ENCODE measurements at regions of chr11 and their contacts with region 1.

Region 1: DNA sequence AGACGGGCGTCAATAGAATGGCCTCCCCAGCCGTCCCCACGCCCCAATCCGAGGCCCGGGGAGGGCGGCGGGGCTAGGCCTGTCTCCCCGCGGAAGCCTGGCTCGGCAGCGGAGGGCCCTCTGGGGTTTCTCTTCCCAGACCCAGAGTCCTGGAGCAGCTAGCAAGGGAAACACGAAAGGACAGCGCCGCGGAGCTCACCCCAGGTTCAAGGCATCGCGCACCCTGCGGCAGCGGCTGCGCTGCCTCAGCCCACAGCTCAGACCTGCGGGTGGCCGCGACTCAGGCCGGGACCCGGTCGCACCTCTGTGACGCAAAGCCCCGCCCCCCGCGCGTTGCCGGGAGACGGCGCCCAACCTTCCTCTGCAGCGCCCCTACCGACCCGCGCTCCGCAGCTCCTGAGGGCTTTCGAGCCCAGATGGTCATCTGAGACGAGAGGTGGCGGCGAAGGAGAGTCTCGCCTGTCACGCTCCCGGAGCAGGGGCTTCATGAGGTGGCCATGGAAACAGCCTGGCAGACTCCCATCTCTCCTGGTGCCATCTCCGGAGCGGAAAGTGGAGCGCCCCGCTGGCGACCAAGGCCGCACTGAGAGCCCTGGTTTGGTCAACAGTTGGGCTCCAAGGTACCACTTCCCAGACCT is at the start of gene RNF141:
- DNase-seq: peak; percentile 97
- ATAC-seq: peak; percentile 98
- H3K4me3 Mint-ChIP-seq: peak within 1 kb of the TSS; percentile 93
- H3K27ac Mint-ChIP-seq: peak within 1 kb of the TSS; percentile 86
- H3K4me1 Mint-ChIP-seq: peaks cover 24% of the 10 kb centered on the region
- H3K27me3 Mint-ChIP-seq: no peaks in the 10 kb centered on the region
- CTCF ChIP-seq: peak; percentile 87
- total RNA-seq, gene RNF141: 19.4 to 20.8 TPM

Region 2: GRCh38 chr11:10155793-10156490 is 385.1 kb before region 1 on chr11:
- CTCF ChIA-PET with region 1: no interaction called
- POLR2A ChIA-PET with region 1: no interaction called
- intact Hi-C with region 1: no loop called
- DNase-seq: no peak
- ATAC-seq: no peak
- H3K4me3 Mint-ChIP-seq: no peak overlapping the region
- H3K27ac Mint-ChIP-seq: no peak overlapping the region
- H3K4me1 Mint-ChIP-seq: peaks cover 3% of the 10 kb centered on the region
- H3K27me3 Mint-ChIP-seq: no peaks in the 10 kb centered on the region
- CTCF ChIP-seq: no peak

Region 3: DNA sequence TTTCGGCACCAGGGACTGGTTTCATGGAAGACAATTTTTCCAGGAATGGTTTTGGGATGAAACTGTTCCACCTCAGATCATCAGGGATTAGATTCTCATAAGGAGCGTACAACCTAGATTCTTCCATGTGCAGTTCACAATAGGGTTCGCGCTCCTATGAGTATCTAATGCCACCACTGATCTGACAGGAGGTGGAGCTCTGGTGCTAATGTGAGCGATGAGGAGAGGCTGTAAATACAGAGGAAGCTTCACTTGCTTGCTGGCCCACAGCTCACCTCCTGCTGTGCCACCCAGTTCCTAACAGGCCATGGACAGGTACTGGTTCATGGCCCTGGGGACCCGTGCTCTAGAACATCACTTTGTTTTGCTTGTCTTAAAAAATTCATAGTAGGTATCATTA is 127.8 kb before region 1 on chr11:
- CTCF ChIA-PET with region 1: interaction called, 40 read pairs
- POLR2A ChIA-PET with region 1: no interaction called
- intact Hi-C with region 1: no loop called
- DNase-seq: peak; percentile 72
- ATAC-seq: peak; percentile 93
- H3K4me3 Mint-ChIP-seq: no peak overlapping the region
- H3K27ac Mint-ChIP-seq: no peak overlapping the region
- H3K4me1 Mint-ChIP-seq: peaks cover 28% of the 10 kb centered on the region
- H3K27me3 Mint-ChIP-seq: no peaks in the 10 kb centered on the region
- CTCF ChIP-seq: peak; percentile 58

Region 4: DNA sequence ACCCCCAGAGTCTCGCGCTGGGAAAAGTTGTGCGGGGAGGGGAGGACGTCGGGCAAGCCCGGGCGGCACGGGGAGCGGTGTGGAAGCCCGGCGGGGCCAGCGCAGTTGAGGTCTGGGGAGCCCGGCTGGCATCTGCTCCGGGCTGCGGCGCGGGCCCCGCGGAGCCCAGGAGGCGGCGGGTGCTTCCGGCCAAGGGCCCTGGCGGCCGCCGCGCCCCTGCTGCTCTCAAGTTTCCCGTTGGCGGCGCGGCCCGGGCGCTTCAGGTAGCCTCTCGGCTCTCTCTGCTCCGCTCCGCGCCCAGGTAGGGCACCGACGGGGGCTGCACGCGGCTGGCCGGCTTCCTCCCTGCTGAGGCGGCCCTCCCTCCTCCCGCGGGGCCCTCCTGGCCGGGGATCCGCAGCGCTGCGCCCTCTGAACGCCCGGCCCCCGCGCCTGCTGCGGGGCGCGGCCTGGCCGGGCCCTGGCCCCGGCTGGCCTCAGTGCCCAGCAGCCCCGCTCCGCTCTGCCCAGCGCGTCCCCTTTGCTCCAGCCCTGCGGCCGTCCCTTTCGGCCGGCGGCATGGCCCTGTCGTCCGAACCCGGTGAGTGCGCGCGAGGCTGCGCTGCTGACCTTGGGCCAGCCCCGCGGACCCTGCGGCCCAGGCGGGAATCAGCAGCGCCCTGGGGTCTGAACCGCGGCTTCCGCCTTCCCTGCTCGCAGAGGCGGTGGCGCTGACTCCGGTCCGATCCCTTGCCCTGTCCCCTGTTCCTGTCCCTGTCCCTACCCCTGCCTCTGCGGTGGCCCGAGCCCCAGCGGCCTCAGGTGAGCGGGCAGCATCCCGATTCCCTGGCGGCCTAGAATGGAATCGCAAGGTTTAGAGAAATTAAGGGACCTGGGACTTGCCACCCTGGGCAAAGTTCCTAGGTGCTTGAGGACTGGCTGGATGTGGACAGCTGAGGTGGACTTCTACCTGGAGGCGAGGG is 90.3 kb before region 1 on chr11:
- CTCF ChIA-PET with region 1: interaction called, 40 read pairs
- POLR2A ChIA-PET with region 1: interaction called, 6 read pairs
- intact Hi-C with region 1: loop called (anchors 5 kb)
- DNase-seq: peak; percentile 66
- ATAC-seq: peak; percentile 38
- H3K4me3 Mint-ChIP-seq: peak overlapping the region; percentile 77
- H3K27ac Mint-ChIP-seq: peak overlapping the region; percentile 91
- H3K4me1 Mint-ChIP-seq: peaks cover 64% of the 10 kb centered on the region
- H3K27me3 Mint-ChIP-seq: no peaks in the 10 kb centered on the region
- CTCF ChIP-seq: peak; percentile 65

Region 5: GRCh38 chr11:10502770-10503169 is 38.3 kb before region 1 on chr11:
- CTCF ChIA-PET with region 1: interaction called, 10 read pairs
- POLR2A ChIA-PET with region 1: interaction called, 5 read pairs
- intact Hi-C with region 1: no loop called
- DNase-seq: no peak
- ATAC-seq: no peak
- H3K4me3 Mint-ChIP-seq: no peak overlapping the region
- H3K27ac Mint-ChIP-seq: no peak overlapping the region
- H3K4me1 Mint-ChIP-seq: no peaks in the 10 kb centered on the region
- H3K27me3 Mint-ChIP-seq: no peaks in the 10 kb centered on the region
- CTCF ChIP-seq: no peak

Region 6: DNA sequence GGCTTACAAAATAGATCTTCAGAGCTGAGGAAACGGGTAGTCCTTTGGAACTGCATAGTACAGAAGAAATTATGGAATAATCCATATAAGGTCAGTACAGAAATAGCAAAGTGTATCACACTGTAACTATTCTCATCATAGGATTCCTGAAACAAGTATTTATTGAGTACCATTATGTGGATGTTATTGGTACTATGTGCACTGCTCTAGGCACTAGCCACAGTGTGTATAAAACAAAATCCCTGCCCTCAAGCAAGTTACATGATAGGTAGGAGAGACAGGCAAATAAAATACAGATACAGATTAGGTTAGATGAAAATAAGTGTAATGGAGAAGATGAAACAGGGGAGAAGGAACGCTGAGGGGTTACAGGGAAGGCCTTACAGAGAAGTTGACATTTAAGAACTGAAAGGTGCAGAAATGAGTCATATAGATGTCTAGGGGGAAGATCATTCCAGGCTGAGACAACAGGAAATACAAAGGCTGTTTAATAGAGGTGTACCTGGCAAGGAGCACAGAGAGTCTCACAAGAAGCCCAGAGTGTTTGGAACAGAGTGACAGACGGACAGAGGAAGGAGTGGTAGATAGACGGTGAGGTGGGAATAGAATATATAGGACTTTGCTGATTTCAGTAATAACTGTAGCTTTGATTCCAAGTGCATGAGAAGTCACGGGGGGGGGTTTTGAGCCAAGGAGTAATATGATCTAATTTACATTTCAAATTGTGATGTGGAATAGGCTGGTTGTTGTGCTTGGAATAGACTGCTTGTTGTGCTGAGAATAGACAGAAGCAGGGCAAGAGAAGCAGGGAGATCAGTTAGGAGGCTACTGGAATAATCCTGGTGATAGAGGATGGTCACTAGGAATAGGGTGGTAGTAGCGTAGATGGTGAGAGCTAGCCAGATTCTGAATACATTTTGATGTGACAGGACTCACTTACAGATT is 13.8 kb before region 1 on chr11:
- CTCF ChIA-PET with region 1: interaction called, 53 read pairs
- POLR2A ChIA-PET with region 1: interaction called, 11 read pairs
- intact Hi-C with region 1: no loop called
- DNase-seq: peak; percentile 15
- ATAC-seq: peak; percentile 97
- H3K4me3 Mint-ChIP-seq: peak overlapping the region; percentile 3
- H3K27ac Mint-ChIP-seq: peak overlapping the region; percentile 80
- H3K4me1 Mint-ChIP-seq: peaks cover 20% of the 10 kb centered on the region
- H3K27me3 Mint-ChIP-seq: no peaks in the 10 kb centered on the region
- CTCF ChIP-seq: no peak

Region 7: GRCh38 chr11:10641177-10641911 is 100.3 kb after region 1 on chr11:
- CTCF ChIA-PET with region 1: interaction called, 11 read pairs
- POLR2A ChIA-PET with region 1: no interaction called
- intact Hi-C with region 1: no loop called
- DNase-seq: no peak
- ATAC-seq: no peak
- H3K4me3 Mint-ChIP-seq: no peak overlapping the region
- H3K27ac Mint-ChIP-seq: no peak overlapping the region
- H3K4me1 Mint-ChIP-seq: no peaks in the 10 kb centered on the region
- H3K27me3 Mint-ChIP-seq: no peaks in the 10 kb centered on the region
- CTCF ChIP-seq: no peak

Region 8: DNA sequence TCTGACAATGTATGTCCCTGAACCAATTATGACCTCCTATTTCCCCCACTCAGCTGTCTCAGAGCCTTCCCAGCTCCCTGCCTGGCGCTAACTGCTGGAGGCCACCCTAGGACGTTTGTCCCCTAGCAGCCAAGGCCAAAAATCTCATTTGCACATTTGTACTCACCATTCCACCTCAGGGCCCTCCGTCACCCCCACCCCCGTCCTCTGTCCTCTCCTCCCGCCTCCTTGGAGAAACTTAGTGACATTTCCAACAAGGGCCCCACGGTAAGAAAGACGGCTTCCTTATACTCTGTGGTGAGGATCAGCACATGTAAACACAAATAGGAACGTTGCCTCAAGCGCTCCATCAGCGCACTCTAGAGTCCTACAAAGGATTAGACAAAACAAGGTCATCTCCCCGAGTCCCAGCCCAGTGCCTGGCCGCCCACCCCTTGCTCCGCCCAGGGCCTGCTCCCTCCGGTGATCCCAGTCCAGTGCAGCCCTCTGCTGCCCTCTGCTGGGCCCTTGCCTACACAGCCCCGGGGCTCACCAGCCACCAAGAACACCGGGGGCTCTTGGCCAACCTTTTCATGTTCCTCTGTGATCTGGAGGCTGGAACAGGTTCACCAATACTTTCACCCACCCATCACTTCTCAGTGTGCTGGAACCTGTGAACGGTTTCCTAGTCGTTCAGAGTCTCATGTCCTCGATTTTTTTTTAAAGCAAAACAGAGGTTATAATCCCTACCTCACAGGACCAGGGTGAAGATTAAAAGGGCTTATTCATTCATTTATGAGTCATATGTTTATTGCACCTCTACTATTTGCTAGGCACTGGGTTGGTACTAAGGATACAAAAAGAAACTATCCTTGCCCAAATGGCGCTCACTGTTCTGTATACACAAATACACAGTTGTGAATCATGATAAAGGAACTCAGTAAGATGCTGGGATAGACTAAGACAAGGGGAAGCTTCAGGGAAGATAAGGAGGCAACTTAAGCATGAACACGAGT is 194.7 kb after region 1 on chr11:
- CTCF ChIA-PET with region 1: interaction called, 11 read pairs
- POLR2A ChIA-PET with region 1: interaction called, 3 read pairs
- intact Hi-C with region 1: no loop called
- DNase-seq: peak; percentile 96
- ATAC-seq: peak; percentile 100
- H3K4me3 Mint-ChIP-seq: no peak overlapping the region
- H3K27ac Mint-ChIP-seq: no peak overlapping the region
- H3K4me1 Mint-ChIP-seq: peaks cover 9% of the 10 kb centered on the region
- H3K27me3 Mint-ChIP-seq: peaks cover 1% of the 10 kb centered on the region
- CTCF ChIP-seq: peak; percentile 92

Measured in activated CD8-positive, alpha-beta T cell treated with anti-CD3 and anti-CD28 coated beads for 36 hours (primary cell).